Cardiac septum (tissue), 1 donor: ENCODE measurements at regions of chr10 and their contacts with region 1.

Region 1: GRCh38 chr10:88926566-88927415 is 25.8 kb downstream of the ACTA2 start:
- DNase-seq: no peak

Region 2: GRCh38 chr10:88880282-88881076 is 46.3 kb before region 1 on chr10:
- intact Hi-C with region 1: loop called (anchors 2 kb)
- DNase-seq: peak; percentile 92

Region 3: GRCh38 chr10:88896372-88896993 is 30.3 kb before region 1 on chr10:
- intact Hi-C with region 1: no loop called
- DNase-seq: no peak

Region 4: DNA sequence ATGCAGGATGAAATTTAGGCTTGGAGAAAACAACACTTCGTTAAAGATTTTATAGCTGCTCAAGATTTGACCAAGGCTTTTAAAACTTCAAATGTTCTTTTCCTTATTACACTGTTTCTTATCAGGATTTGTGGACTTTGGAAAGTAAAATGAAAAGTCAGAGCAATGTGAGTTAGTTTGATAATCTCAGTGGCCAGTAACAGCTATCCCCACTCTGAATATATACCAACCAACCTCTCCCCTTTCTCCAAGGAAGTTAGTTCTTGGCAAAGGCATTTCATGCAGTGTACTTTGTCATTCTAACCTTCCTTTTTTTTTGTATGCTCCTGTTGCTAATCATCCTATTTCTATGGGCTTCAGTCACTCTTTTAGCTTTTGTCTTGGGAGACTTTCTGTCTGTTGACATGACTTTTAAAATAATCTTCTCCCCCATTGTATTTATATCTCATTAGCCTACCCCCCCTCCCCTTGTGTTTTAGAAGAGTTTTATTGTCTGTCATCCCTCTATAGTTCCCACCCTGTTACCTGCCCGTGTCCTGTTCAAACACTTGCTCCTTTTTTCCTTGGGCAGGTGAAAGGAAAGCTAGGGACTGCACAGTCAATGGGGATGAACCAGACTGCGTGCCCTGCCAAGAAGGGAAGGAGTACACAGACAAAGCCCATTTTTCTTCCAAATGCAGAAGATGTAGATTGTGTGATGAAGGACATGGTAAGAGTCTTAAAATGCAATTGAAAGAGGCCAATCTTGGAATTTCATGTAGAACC is 80.5 kb after region 1 on chr10:
- intact Hi-C with region 1: no loop called
- DNase-seq: no peak